Heart left ventricle (tissue), 16 donors: ENCODE measurements at regions of chr14 and their contacts with region 1.

Region 1: GRCh38 chr14:102039157-102039556 is 47.7 kb downstream of the HSP90AA1 start:
- DNase-seq: no peak
- ATAC-seq: no peak
- H3K4me3 ChIP-seq: no peak overlapping the region
- H3K27ac ChIP-seq: no peak overlapping the region
- H3K4me1 ChIP-seq: peaks cover 0 to 14% (median 3%) of the 10 kb centered on the region in 12 donors
- H3K27me3 ChIP-seq: no peaks in the 10 kb centered on the region
- CTCF ChIP-seq: no peak
- POLR2A ChIP-seq: no peak

Region 2: GRCh38 chr14:102000902-102001301 is 38.3 kb before region 1 on chr14:
- intact Hi-C with region 1: loop called in 2 of 10 experiments (anchors 5 to 10 kb)
- DNase-seq: no peak
- ATAC-seq: no peak
- H3K4me3 ChIP-seq: no peak overlapping the region
- H3K27ac ChIP-seq: no peak overlapping the region
- H3K4me1 ChIP-seq: no peaks in the 10 kb centered on the region
- H3K27me3 ChIP-seq: no peaks in the 10 kb centered on the region
- CTCF ChIP-seq: no peak
- POLR2A ChIP-seq: no peak